CD8-positive, alpha-beta T cell (primary cell): ENCODE measurements at regions of chr22 and their contacts with region 1.

Region 1: GRCh38 chr22:31496007-31496734 is at the start of gene SFI1:
- DNase-seq: peak; percentile 93 to 98 (median 96)
- ATAC-seq: peak; percentile 83
- H3K4me3 ChIP-seq: peak within 1 kb of the TSS; percentile 83 to 91
- H3K4me3 Mint-ChIP-seq: peak within 1 kb of the TSS; percentile 95
- H3K27ac ChIP-seq: peak within 1 kb of the TSS; percentile 87 to 90
- H3K27ac Mint-ChIP-seq: peak within 1 kb of the TSS; percentile 99
- H3K4me1 ChIP-seq: peaks cover 27% of the 10 kb centered on the region
- H3K4me1 Mint-ChIP-seq: peaks cover 45% of the 10 kb centered on the region
- H3K27me3 ChIP-seq: no peaks in the 10 kb centered on the region
- H3K27me3 Mint-ChIP-seq: no peaks in the 10 kb centered on the region
- CTCF ChIP-seq: no peak
- total RNA-seq, gene SFI1: 217 to 235 TPM

Region 2: DNA sequence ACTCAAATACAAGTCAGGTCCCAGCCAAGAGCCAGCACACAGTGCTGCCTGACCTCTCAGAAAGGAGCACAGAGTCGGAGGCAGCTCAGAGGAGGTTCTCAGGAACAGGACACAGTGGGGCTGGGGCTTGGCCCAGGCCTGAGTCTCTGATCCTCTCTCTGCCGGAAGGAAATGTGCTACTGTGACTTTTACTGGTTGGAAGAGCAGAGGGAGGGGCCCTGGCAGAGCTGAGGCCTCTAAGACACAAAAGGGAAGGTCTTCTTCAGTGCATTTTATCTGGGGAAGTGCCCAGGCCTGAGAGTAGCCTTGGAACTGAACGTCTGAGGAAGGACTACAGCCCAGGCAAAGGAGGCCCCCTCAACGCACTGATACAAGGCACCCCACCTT is 1190.7 kb before region 1 on chr22:
- CTCF ChIA-PET with region 1: no interaction called
- POLR2A ChIA-PET with region 1: no interaction called
- intact Hi-C with region 1: loop called in 1 of 2 experiments (anchors 10 kb)
- DNase-seq: peak in 8 of 9 experiments; percentile 43 to 80 (median 56)
- ATAC-seq: peak; percentile 50
- H3K4me3 ChIP-seq: peak overlapping the region; percentile 36 to 38
- H3K4me3 Mint-ChIP-seq: peak overlapping the region; percentile 69
- H3K27ac ChIP-seq: peak overlapping the region; percentile 62 to 77
- H3K27ac Mint-ChIP-seq: peak overlapping the region; percentile 98
- H3K4me1 ChIP-seq: peaks cover 100% of the 10 kb centered on the region
- H3K4me1 Mint-ChIP-seq: peaks cover 97% of the 10 kb centered on the region
- H3K27me3 ChIP-seq: no peaks in the 10 kb centered on the region
- H3K27me3 Mint-ChIP-seq: no peaks in the 10 kb centered on the region
- CTCF ChIP-seq: no peak

Region 3: GRCh38 chr22:31399211-31400028 is 96.8 kb before region 1 on chr22 and contains the start of gene DRG1:
- CTCF ChIA-PET with region 1: no interaction called
- POLR2A ChIA-PET with region 1: no interaction called
- intact Hi-C with region 1: loop called in 1 of 2 experiments (anchors 1 kb)
- DNase-seq: peak; percentile 91 to 98 (median 97)
- ATAC-seq: peak; percentile 96
- H3K4me3 ChIP-seq: peak within 1 kb of the TSS; percentile 76 to 99
- H3K4me3 Mint-ChIP-seq: peak within 1 kb of the TSS; percentile 95
- H3K27ac ChIP-seq: peak within 1 kb of the TSS; percentile 82 to 87
- H3K27ac Mint-ChIP-seq: peak within 1 kb of the TSS; percentile 96
- H3K4me1 ChIP-seq: peaks cover 13% of the 10 kb centered on the region
- H3K4me1 Mint-ChIP-seq: peaks cover 31% of the 10 kb centered on the region
- H3K27me3 ChIP-seq: no peaks in the 10 kb centered on the region
- H3K27me3 Mint-ChIP-seq: no peaks in the 10 kb centered on the region
- CTCF ChIP-seq: no peak
- total RNA-seq, gene DRG1: 55.9 to 63.3 TPM

Region 4: GRCh38 chr22:31537019-31537535 is 40.9 kb after region 1 on chr22:
- CTCF ChIA-PET with region 1: no interaction called
- POLR2A ChIA-PET with region 1: no interaction called
- intact Hi-C with region 1: loop called in 1 of 2 experiments (anchors 5 kb)
- DNase-seq: peak in 2 of 9 experiments; percentile 17 to 55
- ATAC-seq: peak; percentile 55
- H3K4me3 ChIP-seq: no peak overlapping the region
- H3K4me3 Mint-ChIP-seq: no peak overlapping the region
- H3K27ac ChIP-seq: peak overlapping the region in 1 of 2 experiments; percentile 54
- H3K27ac Mint-ChIP-seq: peak overlapping the region; percentile 69
- H3K4me1 ChIP-seq: peaks cover 3% of the 10 kb centered on the region
- H3K4me1 Mint-ChIP-seq: peaks cover 37% of the 10 kb centered on the region
- H3K27me3 ChIP-seq: no peaks in the 10 kb centered on the region
- H3K27me3 Mint-ChIP-seq: no peaks in the 10 kb centered on the region
- CTCF ChIP-seq: no peak